ENCODE measurements at regions of chr6 and their contacts with region 1.

Region 1: DNA sequence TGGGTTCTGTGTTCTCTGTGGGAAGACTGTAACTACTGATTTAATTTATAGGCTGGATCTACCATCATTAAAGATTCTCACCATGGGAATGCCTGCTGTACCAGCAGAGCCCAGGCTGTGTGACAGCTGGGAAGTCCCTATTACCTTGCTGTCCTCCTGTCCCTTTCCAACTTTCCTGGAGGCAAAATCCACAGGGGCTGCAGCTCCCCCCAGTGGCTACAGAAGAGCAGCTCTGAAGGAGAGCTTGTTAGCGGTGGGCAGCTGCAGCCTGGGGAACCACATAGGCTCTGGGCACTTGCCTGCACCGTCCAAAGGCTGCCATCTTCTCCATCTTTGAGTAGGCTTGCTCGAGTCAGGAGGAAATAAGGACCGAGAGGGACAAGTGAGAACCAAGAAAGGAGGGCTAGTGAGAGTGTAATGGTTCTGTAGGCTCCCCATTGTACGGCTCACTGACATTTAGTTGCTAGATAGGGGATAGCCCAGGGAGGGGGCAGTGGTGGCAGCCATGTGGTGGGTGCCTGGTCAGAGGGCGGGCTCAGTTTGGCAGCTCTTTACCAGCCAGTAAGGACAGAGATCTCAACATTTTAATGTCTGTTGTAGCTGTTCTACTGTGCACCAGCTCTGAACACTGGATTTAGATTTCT is 155.1 kb upstream of the MLIP start:
- DNase-seq: peak; percentile 42 to 94 (median 83)

Region 2: DNA sequence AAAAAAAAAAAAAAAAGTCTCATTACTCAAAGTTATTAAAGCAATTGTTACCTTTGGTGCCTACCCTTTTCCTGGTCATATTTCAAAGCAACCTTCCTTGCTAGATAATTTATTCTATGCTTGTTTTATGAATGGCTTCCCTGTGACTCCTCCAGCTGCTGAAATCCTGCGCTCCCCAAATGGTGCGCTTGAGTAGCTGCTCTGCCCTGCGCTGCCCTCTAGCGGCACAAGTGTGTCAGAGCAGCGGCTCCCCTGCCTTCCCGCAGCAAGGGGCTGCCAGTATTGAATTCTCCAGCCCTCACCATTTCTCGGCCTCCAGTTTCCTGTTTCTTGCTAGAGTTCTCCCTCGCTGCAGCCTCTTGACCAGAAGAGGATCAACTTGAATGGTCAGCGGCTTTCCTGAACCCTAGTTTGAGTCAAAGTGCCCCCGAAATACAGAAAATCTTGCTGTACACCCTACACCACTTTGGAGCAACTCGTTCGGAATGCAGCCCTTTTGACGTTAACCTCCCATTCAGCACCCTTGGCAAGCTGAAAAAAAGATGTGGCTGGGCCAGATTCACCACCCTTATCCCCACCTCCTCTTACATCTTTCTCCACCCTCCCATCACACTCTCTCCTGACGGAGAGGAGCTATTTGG is 230.3 kb before region 1 on chr6:
- intact Hi-C with region 1: loop called (anchors 10 kb)
- DNase-seq: peak; percentile 65 to 93 (median 86)

Region 3: DNA sequence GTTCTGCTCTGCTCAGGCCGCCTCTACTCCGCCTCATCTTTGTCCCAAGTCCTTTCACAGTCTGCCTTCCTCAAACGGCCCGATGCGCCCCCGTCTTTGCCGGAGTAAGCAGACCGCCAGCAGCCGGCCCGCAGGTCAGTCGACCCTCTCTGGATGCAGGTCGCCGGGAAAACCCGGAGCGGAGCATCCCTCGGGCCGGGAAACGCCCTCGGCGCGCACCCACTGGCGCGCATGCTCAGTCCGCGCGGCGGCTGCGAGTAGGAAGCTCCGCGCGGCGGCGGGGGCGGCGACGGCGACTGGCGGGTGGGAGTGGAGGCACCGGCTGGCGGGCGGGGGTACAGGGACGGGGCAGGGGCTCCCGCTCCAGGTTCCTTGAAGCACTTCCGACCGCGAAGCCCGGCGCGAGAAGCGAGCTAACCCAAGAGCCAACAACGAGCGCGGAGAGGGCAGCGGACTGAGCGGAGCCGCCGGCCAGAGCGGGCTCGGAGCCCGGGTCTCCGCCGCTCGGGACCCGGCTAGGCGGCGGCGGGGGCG is 161.4 kb before region 1 on chr6 and contains the start of gene LRRC1:
- intact Hi-C with region 1: loop called (anchors 5 kb)
- DNase-seq: peak; percentile 74 to 97 (median 93)

Region 4: GRCh38 chr6:54335871-54336270 is 379.7 kb after region 1 on chr6:
- intact Hi-C with region 1: no loop called
- DNase-seq: no peak

Measured in head of caudate nucleus (tissue), 42 donors.